HAP-1 (cell line): ENCODE measurements at regions of chr17 and their contacts with region 1.

Region 1: DNA sequence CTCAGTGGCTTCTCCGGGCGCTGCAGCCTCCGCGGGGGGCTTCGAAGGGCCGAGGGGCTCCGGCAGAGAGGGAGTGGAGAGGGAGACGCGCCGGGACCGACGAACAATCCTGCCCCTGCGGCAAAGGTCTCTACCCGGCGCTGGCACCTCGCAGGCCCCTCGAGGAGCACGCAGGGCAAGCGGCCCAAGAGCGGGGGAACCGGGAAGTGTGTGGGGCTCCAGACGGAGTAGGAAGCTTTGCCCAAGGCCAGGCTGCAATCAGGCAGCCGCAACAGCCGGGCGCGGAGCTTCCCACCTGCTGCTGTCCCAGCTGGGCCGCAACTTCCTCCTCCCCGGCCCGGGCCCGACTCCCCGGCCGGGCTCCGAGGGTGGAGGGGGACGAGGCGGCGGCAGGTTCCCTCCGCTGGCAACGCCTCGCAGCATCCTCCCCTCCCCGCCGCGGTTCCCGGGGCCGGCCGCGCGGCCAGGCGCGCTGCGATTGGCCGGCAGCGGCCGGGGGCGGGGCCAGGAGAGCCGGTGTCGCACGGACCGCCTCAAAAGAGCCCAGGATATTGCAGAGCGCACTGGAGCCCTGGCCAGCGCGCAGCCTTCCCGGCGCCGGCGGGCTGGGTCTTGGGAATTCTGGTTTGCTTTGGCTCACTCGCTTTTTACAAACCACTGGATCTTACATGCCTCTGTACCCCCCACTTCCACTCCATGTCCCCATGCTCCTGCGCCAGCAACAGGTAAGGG is at the start of gene KCNJ2:
- DNase-seq: peak; percentile 56 to 76
- H3K4me3 ChIP-seq: peak within 1 kb of the TSS; percentile 24
- H3K4me1 ChIP-seq: no peaks in the 10 kb centered on the region
- H3K27me3 ChIP-seq: 0 out of 2 replicates have a peak, but pooled peaks cover 2% of the 10 kb centered on the region

Region 2: GRCh38 chr17:69574257-69575197 is 594.6 kb before region 1 on chr17:
- in situ Hi-C with region 1: loop called (anchors 25 kb)
- DNase-seq: peak in 1 of 2 experiments; percentile 8
- H3K4me3 ChIP-seq: no peak overlapping the region
- H3K4me1 ChIP-seq: no peaks in the 10 kb centered on the region
- H3K27me3 ChIP-seq: 0 out of 2 replicates have a peak, but pooled peaks cover 2% of the 10 kb centered on the region